ENCODE measurements at regions of chr18 and their contacts with region 1.

Region 1: GRCh38 chr18:58781627-58782194 is 83.0 kb upstream of the ZNF532 start:
- DNase-seq: peak; percentile 87
- H3K4me3 ChIP-seq: no peak overlapping the region
- H3K27ac ChIP-seq: no peak overlapping the region
- H3K27me3 ChIP-seq: no peaks in the 10 kb centered on the region
- CTCF ChIP-seq: peak; percentile 87

Region 2: DNA sequence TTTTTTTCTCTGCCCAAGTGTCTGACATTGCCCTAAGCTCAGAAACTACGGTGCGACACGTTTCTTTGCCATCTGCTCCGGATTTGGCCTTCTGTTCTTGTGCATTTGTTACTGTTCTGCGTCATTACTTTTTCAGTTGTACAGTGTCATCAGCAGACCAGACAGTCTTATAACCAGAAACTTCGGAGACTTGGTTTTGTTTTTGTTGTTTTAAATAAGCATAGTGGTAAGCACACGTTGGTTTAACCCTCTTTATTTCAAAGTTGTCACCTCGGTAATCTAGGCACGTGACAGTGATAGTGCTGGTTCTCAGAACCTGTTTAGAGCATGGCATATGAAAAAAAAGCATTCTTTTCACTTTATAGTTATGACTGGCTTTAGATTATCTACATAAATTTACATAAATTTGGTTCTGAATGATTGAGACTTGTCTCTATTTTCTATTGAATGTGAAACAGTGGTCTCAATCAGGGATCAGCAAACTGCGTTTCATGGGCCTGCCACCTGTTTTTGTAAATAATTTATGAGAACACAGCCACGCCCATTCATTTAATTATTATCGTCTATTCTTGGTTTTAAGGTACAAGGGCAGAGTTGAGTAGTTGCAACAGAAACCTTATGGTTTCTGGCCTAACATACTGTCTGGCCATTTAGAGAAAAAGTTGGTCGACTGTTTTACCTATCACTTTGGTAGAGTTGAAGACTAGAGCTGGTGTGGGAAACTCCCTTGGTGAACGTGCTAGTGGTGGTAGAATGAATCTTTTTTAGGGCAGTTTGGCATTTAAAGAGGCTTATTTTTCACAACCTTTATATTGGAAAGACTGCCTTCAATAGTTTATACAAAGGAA is 189.5 kb after region 1 on chr18:
- in situ Hi-C with region 1: no loop called
- DNase-seq: no peak
- H3K4me3 ChIP-seq: no peak overlapping the region
- H3K27ac ChIP-seq: no peak overlapping the region
- H3K27me3 ChIP-seq: no peaks in the 10 kb centered on the region
- CTCF ChIP-seq: no peak

Region 3: DNA sequence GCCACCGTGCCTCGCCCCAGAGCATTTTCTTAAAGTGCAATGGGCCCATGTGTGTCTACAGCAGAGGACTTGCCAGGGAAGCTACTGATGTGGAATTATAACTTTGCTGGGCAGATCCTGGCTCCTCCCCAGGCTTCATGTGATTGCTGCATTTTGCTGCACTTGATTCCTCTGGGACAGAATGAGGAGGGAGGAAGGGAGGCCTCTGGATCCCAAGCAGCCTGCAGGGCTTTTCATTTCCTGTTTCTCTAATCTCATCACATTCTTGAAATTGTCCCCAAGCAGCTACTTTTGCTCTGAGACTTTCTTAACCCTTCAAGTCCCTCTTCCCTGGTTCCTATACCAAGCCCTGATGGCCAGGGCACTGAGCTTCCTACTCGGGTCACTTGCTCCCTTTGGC is 223.6 kb after region 1 on chr18:
- in situ Hi-C with region 1: no loop called
- DNase-seq: peak; percentile 81
- H3K4me3 ChIP-seq: no peak overlapping the region
- H3K27ac ChIP-seq: peak overlapping the region; percentile 60
- H3K27me3 ChIP-seq: no peaks in the 10 kb centered on the region
- CTCF ChIP-seq: no peak

Region 4: GRCh38 chr18:59070181-59070912 is 288.6 kb after region 1 on chr18:
- in situ Hi-C with region 1: loop called (anchors 25 kb)
- DNase-seq: peak; percentile 83
- H3K4me3 ChIP-seq: no peak overlapping the region
- H3K27ac ChIP-seq: no peak overlapping the region
- H3K27me3 ChIP-seq: no peaks in the 10 kb centered on the region
- CTCF ChIP-seq: peak; percentile 95